CD14-positive monocyte (primary cell): ENCODE measurements at regions of chr18 and their contacts with region 1.

Region 1: DNA sequence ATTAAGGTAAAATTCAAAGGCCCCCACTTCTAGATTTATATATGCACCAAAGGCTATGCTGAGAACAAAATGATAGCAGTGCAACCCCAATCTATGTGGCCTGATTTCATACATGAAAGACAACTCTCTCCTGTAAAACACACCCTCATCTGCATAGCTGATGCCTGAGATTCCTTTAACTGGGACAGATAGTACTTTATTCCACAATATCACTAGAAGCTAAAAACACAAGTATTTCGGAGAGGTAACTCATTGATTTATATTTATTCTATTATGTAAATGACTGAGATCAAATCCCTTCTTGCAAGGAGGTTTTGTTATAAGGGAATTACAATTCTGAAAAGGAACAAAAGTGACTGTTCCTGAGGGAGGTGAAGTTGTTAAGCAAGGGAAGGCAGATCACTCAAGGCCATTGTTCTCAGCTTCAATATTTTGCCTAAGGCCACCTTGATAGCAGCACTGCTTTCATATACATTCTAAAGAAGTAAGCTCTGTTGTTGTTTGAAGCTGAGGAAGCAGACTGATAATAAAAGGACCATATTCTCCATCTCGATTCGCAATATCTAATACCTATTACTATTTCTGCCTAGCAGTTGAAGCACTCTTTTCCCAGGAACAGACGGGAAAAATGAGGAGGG is 471.0 kb upstream of the CDH7 start:
- DNase-seq: no peak
- H3K4me3 ChIP-seq: no peak overlapping the region
- H3K4me3 Mint-ChIP-seq: no peak overlapping the region
- H3K27ac ChIP-seq: no peak overlapping the region
- H3K27ac Mint-ChIP-seq: no peak overlapping the region
- H3K4me1 ChIP-seq: no peaks in the 10 kb centered on the region
- H3K4me1 Mint-ChIP-seq: no peaks in the 10 kb centered on the region
- H3K27me3 ChIP-seq: no peaks in the 10 kb centered on the region
- H3K27me3 Mint-ChIP-seq: no peaks in the 10 kb centered on the region
- CTCF ChIP-seq: no peak

Region 2: GRCh38 chr18:65206551-65207260 is 73.1 kb before region 1 on chr18:
- intact Hi-C with region 1: no loop called
- DNase-seq: no peak
- H3K4me3 ChIP-seq: no peak overlapping the region
- H3K4me3 Mint-ChIP-seq: no peak overlapping the region
- H3K27ac ChIP-seq: no peak overlapping the region
- H3K27ac Mint-ChIP-seq: no peak overlapping the region
- H3K4me1 ChIP-seq: no peaks in the 10 kb centered on the region
- H3K4me1 Mint-ChIP-seq: no peaks in the 10 kb centered on the region
- H3K27me3 ChIP-seq: no peaks in the 10 kb centered on the region
- H3K27me3 Mint-ChIP-seq: peaks cover 0 to 1% (median 0%) of the 10 kb centered on the region in 3 donors
- CTCF ChIP-seq: no peak

Region 3: GRCh38 chr18:65336411-65336810 is 56.6 kb after region 1 on chr18:
- intact Hi-C with region 1: loop called in 1 of 2 experiments (anchors 10 kb)
- DNase-seq: no peak
- H3K4me3 ChIP-seq: no peak overlapping the region
- H3K4me3 Mint-ChIP-seq: no peak overlapping the region
- H3K27ac ChIP-seq: no peak overlapping the region
- H3K27ac Mint-ChIP-seq: no peak overlapping the region
- H3K4me1 ChIP-seq: no peaks in the 10 kb centered on the region
- H3K4me1 Mint-ChIP-seq: no peaks in the 10 kb centered on the region
- H3K27me3 ChIP-seq: no peaks in the 10 kb centered on the region
- H3K27me3 Mint-ChIP-seq: no peaks in the 10 kb centered on the region
- CTCF ChIP-seq: no peak

Region 4: DNA sequence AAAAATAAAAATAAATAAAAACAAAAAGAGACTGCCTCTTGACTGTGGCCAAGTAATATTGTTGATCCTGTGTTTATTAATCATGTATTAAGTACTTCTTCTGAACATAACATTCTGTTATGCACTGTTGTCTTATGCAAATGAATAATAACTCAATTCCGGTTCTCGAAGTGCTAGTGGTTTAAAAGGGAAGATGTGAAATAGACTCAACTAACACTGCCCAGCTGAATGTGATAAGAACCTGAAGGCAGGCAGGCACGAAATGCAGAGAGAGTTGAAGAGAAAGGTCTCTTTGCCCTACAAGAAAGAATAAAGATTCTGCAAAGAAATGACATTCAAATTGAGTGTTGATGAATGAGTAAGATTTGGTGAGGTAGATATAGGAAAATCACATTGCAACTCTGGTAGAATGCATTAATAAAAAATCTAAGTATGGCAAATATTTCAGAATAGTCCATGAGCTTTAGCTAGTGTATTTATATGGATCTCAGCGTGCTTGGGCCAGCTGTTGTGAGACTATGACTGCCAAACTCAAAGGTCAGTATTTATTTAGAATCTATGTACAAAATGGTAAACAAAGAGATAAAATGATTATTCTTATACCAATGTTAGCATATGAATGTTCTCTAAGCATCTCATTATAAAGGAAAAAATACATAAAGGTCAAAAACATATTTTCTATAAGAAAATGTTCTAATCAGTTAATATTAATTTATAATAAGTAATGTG is 118.7 kb after region 1 on chr18:
- intact Hi-C with region 1: no loop called
- DNase-seq: no peak
- H3K4me3 ChIP-seq: no peak overlapping the region
- H3K4me3 Mint-ChIP-seq: no peak overlapping the region
- H3K27ac ChIP-seq: no peak overlapping the region
- H3K27ac Mint-ChIP-seq: no peak overlapping the region
- H3K4me1 ChIP-seq: no peaks in the 10 kb centered on the region
- H3K4me1 Mint-ChIP-seq: no peaks in the 10 kb centered on the region
- H3K27me3 ChIP-seq: no peaks in the 10 kb centered on the region
- H3K27me3 Mint-ChIP-seq: no peaks in the 10 kb centered on the region
- CTCF ChIP-seq: no peak